ENCODE measurements at regions of chr5 and their contacts with region 1.

Region 1: DNA sequence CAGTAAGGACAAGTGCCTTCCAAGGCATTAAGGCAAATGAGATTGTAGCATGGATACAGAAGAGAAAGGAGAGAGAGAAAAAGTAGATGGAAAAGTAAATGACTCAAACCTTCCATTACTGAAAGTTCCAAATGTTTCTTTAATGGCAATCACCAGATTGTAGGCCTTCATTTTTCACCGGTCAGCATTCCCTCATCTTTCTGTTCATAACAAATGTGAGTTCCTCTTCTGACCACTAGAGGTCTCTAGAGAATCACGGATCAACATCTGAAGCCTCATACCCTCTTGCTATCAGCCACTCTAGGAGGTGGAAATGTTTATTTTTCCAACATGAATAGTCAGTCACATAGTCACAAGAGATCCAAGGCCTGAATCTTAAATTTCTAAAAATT is 73.6 kb upstream of the RPS23 start:
- DNase-seq: no peak
- ATAC-seq: peak; percentile 90
- H3K4me3 ChIP-seq: no peak overlapping the region
- H3K27ac ChIP-seq: no peak overlapping the region
- H3K4me1 ChIP-seq: peaks cover under 1% of the 10 kb centered on the region
- H3K27me3 ChIP-seq: no peaks in the 10 kb centered on the region
- CTCF ChIP-seq: peak; percentile 73 to 76 (median 75)
- EP300 ChIP-seq: no peak
- POLR2A ChIP-seq: no peak
- RAD21 ChIP-seq: peak; percentile 83

Region 2: GRCh38 chr5:82074950-82075349 is 276.8 kb before region 1 on chr5:
- CTCF ChIA-PET with region 1: no interaction called
- POLR2A ChIA-PET with region 1: no interaction called
- RAD21 ChIA-PET with region 1: no interaction called
- SMC1A ChIA-PET with region 1: no interaction called
- in situ Hi-C with region 1: no loop called
- intact Hi-C with region 1: no loop called
- DNase-seq: no peak
- ATAC-seq: no peak
- H3K4me3 ChIP-seq: no peak overlapping the region
- H3K27ac ChIP-seq: no peak overlapping the region
- H3K4me1 ChIP-seq: no peaks in the 10 kb centered on the region
- H3K27me3 ChIP-seq: no peaks in the 10 kb centered on the region
- CTCF ChIP-seq: no peak
- EP300 ChIP-seq: no peak
- POLR2A ChIP-seq: no peak
- RAD21 ChIP-seq: no peak

Region 3: DNA sequence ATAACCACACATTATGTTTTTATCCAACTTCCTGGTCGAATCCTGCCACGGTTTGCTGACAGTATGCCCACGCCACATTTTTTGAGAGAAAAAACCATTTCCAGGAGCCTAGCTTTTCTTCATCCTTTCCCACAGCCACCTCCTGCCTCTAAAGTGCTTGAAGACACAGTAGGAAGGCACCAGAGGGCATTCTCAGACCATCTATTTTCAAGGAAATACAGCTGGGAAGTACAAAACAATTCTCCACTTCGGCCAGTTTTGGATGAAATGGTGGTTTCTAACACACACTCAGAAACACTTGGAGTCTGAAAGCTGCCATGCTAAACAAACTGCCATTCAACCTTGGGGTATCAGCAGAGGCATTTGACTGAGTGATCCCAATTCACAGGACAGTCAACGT is 12.7 kb after region 1 on chr5:
- CTCF ChIA-PET with region 1: interaction called, 16 read pairs
- POLR2A ChIA-PET with region 1: no interaction called
- RAD21 ChIA-PET with region 1: interaction called, 4 read pairs
- SMC1A ChIA-PET with region 1: interaction called, 9 read pairs
- in situ Hi-C with region 1: no loop called
- intact Hi-C with region 1: no loop called
- DNase-seq: no peak
- ATAC-seq: no peak
- H3K4me3 ChIP-seq: no peak overlapping the region
- H3K27ac ChIP-seq: no peak overlapping the region
- H3K4me1 ChIP-seq: no peaks in the 10 kb centered on the region
- H3K27me3 ChIP-seq: no peaks in the 10 kb centered on the region
- CTCF ChIP-seq: peak in 2 of 3 experiments; percentile 8 to 9; a peak in 2 of 6 replicates
- EP300 ChIP-seq: no peak
- POLR2A ChIP-seq: no peak
- RAD21 ChIP-seq: peak; percentile 32; the same call in 1 of the 2 replicates

Region 4: DNA sequence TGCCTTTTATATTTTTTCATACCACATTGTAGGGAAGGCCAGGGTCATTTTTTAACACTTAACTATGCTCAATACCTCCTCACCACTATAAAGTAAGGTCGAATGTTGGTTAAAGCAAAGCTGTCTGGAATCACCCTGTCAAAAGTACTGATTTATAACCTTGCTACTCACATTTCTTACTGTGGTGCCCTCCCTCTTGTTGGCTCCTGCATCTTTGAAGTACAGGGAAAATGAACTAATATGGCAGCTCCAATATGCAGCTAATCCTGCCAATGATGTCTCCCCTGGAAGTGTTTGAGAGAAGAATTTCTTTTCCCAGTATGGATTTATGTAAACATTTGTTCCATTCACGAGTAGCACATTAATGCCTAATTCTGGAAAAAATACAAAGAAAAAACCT is 34.8 kb after region 1 on chr5:
- CTCF ChIA-PET with region 1: no interaction called
- POLR2A ChIA-PET with region 1: no interaction called
- RAD21 ChIA-PET with region 1: no interaction called
- SMC1A ChIA-PET with region 1: no interaction called
- in situ Hi-C with region 1: no loop called
- intact Hi-C with region 1: no loop called
- DNase-seq: no peak
- ATAC-seq: no peak
- H3K4me3 ChIP-seq: no peak overlapping the region
- H3K27ac ChIP-seq: no peak overlapping the region
- H3K4me1 ChIP-seq: no peaks in the 10 kb centered on the region
- H3K27me3 ChIP-seq: no peaks in the 10 kb centered on the region
- CTCF ChIP-seq: no peak
- EP300 ChIP-seq: no peak
- POLR2A ChIP-seq: no peak
- RAD21 ChIP-seq: no peak

Region 5: GRCh38 chr5:82635561-82636288 is 284.0 kb after region 1 on chr5:
- CTCF ChIA-PET with region 1: interaction called, 5 read pairs
- POLR2A ChIA-PET with region 1: no interaction called
- RAD21 ChIA-PET with region 1: no interaction called
- SMC1A ChIA-PET with region 1: interaction called, 3 read pairs
- in situ Hi-C with region 1: no loop called
- intact Hi-C with region 1: loop called (anchors 5 kb)
- DNase-seq: no peak
- ATAC-seq: no peak
- H3K4me3 ChIP-seq: no peak overlapping the region
- H3K27ac ChIP-seq: no peak overlapping the region
- H3K4me1 ChIP-seq: no peaks in the 10 kb centered on the region
- H3K27me3 ChIP-seq: no peaks in the 10 kb centered on the region
- CTCF ChIP-seq: no peak
- EP300 ChIP-seq: no peak
- POLR2A ChIP-seq: no peak
- RAD21 ChIP-seq: no peak

Region 6: DNA sequence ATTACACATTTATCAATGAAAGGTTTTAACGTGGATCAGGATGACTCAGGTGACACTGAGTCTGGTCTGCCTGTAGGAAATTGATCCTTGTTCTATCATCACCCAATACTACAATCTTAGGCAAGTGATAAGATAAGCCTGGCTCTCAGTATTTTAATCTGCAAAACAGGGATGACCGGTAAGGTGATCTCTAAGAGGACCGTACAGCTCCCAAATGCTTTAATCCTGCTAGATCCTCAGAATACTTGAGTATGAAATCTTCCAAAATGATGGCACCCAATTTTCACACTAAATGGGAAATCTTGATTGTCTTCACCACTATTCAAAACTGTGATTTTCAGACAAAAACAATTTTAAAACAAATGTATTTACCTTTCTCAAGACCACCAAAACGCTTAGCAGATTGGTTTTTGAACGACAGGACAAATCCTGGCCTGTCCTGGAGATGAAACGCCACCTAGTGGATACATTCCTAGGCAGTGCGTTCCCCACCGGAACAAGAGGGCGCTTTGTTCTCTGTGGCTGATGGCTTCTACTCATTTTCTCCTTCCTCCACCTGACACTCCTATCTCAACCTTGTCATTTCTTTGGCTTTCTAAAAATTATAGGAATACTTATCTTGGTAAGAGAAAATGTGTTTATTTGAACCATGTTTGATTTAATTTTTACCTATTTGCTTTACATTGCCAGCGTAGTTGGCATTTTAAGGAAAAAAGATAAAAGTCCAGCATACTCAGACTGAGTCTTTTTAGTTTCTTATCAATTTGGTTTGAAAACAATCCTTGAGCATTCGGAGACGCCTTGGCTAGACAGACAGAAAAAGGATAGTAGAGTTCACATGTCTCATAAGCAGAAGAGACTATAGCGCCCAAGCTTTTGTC is 1078.6 kb after region 1 on chr5:
- CTCF ChIA-PET with region 1: interaction called, 20 read pairs
- POLR2A ChIA-PET with region 1: no interaction called
- RAD21 ChIA-PET with region 1: interaction called, 4 read pairs
- SMC1A ChIA-PET with region 1: interaction called, 6 read pairs
- in situ Hi-C with region 1: no loop called
- intact Hi-C with region 1: loop called (anchors 1 kb)
- DNase-seq: peak; percentile 21
- ATAC-seq: peak; percentile 98
- H3K4me3 ChIP-seq: no peak overlapping the region
- H3K27ac ChIP-seq: no peak overlapping the region
- H3K4me1 ChIP-seq: peaks cover 4% of the 10 kb centered on the region; the same call in 1 of the 2 replicates
- H3K27me3 ChIP-seq: no peaks in the 10 kb centered on the region
- CTCF ChIP-seq: peak; percentile 86 to 98 (median 91)
- EP300 ChIP-seq: no peak
- POLR2A ChIP-seq: no peak
- RAD21 ChIP-seq: peak; percentile 94

Region 7: DNA sequence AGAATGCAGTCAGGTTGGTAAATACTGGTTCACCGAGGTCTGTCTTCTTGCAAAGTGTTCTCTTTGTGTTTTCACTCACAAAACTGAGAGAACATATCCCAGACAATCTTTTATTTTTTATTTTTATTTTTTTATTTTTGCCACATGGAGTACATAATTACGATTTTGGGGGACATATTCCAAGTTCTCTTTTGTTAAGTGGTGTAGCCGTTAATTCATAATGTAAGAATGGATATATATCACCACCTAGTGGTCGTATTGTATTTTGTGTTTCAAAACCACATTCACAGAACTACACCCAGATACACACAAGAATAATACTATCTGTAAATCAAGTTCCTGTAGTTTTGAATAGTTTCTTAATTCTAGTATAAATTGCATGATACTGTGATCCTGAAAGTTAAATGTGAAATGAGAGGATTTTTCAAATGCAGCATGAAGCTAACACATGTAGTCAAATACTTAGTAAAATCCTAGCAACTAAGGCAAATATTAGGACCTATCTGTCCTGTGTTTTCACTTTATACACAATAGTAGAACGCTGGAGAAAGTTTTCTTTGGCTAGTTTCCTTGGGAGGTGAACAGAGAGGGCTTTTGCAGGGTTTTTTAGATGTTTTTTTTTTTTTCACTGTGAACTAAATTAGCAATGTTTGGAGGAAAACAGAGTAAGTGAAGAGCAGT is 1212.5 kb after region 1 on chr5:
- CTCF ChIA-PET with region 1: interaction called, 39 read pairs
- POLR2A ChIA-PET with region 1: no interaction called
- RAD21 ChIA-PET with region 1: interaction called, 8 read pairs
- SMC1A ChIA-PET with region 1: interaction called, 8 read pairs
- in situ Hi-C with region 1: loop called (anchors 5 kb)
- intact Hi-C with region 1: loop called (anchors 1 kb)
- DNase-seq: no peak
- ATAC-seq: peak; percentile 84
- H3K4me3 ChIP-seq: no peak overlapping the region
- H3K27ac ChIP-seq: no peak overlapping the region
- H3K4me1 ChIP-seq: no peaks in the 10 kb centered on the region
- H3K27me3 ChIP-seq: peaks cover 0 to 2% of the 10 kb centered on the region in 2 experiments; a peak in 1 of 4 replicates
- CTCF ChIP-seq: peak; percentile 20 to 68 (median 52); a peak in 5 of 6 replicates
- EP300 ChIP-seq: no peak
- POLR2A ChIP-seq: no peak
- RAD21 ChIP-seq: peak; percentile 76

Measured in GM12878 (cell line).